ENCODE measurements at regions of chr1 and their contacts with region 1.

Region 1: DNA sequence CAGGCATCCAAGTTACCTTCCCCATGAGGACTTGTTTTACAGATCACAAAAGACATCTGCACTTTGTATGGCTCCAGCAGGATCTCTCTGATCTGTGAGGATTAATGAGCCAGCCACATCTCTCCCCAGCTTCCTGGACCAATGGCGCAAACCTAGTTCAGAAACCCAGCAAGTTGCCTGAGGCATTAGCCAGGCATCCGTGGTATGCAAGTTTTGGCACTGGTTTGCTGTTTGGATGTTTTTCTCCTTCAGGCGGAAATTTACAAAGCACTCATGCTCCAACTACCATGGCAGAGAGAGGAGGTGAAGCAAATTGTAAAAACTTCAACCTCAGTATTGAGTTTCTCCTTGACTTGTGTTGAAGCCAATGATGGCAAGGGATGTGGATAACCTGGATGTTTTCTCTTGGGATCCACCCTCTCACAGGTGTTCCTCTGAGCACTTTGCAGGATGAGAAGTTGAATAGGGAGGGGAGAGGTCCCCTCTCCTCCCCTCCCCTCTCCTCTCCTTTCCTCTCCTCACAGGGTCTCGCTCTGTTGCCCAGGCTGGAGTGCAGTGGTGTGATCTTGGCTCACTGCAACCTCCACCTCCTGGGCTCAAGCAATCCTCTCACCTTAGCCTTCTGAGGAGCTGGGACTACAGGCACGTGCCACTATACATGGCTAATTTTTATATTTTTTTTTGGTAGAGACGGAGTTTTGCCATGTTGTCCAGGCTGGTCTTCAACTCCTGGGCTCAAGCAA is 25.6 kb upstream of the ENO1 start:
- DNase-seq: no peak
- H3K4me3 Mint-ChIP-seq: no peak overlapping the region
- H3K27ac Mint-ChIP-seq: peak overlapping the region; percentile 80
- H3K4me1 Mint-ChIP-seq: peaks cover 51% of the 10 kb centered on the region
- H3K27me3 Mint-ChIP-seq: no peaks in the 10 kb centered on the region

Region 2: DNA sequence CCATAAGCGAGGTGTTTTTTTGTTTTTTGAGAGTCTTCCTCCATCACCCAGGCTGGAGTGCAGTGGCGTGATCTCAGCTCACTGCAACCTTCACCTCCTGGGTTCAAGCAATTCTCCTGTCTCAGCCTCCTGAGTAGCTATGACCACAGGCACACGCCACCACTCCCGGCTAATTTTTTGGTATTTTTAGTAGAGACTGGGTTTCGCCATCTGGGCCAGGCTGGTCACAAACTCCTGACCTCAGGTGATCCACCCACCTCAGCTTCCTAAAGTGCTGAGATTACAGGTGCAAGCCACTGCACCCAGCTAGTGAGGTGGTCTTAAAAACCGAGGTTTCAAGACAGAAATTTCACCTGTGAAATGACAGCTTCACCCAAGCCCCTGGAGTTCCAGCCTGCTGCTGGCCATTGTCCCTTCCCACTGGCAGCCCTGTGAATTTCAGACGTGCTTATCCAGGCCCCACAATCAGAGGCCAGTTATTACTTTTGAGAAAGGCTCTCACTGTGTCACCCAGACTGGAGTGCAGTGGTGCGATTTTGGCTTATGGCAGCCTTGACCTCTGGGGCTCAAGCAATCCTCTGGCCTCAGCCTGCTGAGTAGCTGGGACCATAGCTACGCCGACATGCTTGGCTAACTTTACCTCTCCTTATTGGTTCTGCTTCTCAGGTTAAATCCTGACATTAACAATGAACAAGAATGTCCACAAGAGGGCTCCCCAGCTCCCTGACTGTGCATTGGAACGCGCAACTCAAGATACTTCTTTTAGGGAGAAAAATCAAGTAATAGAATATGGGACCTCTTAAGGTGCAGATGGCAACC is 45.0 kb before region 1 on chr1:
- intact Hi-C with region 1: loop called (anchors 5 kb)
- DNase-seq: peak; percentile 40
- H3K4me3 Mint-ChIP-seq: peak overlapping the region; percentile 46
- H3K27ac Mint-ChIP-seq: peak overlapping the region; percentile 82
- H3K4me1 Mint-ChIP-seq: peaks cover 42% of the 10 kb centered on the region
- H3K27me3 Mint-ChIP-seq: no peaks in the 10 kb centered on the region

Region 3: DNA sequence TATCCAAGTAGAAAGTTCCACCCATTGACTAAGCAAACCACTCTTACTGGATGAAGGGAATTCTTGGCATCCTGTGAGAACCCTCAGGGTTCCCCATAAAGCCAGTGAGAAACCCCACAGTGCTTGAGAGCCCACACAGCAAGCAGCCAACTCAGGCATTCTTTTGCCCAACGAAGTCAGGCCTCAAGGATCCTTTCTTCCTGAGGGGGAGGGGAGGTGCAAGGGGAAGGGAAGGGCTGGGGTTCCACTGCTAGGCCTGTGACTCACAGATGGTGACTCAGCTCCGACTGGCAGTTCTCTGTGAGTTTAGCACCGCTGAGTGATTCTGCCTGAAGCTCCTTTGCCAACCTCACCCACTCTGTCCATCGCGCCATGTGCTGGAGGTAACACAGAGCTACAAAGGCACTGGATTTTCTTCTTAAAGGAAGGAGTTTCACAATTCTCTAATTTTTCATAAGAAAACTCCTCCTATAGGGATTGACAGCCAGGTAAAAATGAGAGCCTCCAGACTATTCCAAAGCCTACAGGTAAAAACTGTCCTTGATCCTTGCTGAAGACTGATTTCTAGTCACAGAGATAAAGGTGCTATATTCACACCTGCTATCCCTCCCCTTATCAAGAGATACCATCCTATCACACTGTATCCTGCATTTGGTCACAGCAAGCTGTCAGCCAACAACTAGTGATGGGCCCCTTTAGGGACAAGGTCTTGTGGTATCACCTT is 30.4 kb before region 1 on chr1:
- intact Hi-C with region 1: loop called (anchors 1 kb)
- DNase-seq: peak; percentile 64
- H3K4me3 Mint-ChIP-seq: peak overlapping the region; percentile 99
- H3K27ac Mint-ChIP-seq: peak overlapping the region; percentile 83
- H3K4me1 Mint-ChIP-seq: peaks cover 74% of the 10 kb centered on the region
- H3K27me3 Mint-ChIP-seq: peaks cover 2% of the 10 kb centered on the region

Region 4: DNA sequence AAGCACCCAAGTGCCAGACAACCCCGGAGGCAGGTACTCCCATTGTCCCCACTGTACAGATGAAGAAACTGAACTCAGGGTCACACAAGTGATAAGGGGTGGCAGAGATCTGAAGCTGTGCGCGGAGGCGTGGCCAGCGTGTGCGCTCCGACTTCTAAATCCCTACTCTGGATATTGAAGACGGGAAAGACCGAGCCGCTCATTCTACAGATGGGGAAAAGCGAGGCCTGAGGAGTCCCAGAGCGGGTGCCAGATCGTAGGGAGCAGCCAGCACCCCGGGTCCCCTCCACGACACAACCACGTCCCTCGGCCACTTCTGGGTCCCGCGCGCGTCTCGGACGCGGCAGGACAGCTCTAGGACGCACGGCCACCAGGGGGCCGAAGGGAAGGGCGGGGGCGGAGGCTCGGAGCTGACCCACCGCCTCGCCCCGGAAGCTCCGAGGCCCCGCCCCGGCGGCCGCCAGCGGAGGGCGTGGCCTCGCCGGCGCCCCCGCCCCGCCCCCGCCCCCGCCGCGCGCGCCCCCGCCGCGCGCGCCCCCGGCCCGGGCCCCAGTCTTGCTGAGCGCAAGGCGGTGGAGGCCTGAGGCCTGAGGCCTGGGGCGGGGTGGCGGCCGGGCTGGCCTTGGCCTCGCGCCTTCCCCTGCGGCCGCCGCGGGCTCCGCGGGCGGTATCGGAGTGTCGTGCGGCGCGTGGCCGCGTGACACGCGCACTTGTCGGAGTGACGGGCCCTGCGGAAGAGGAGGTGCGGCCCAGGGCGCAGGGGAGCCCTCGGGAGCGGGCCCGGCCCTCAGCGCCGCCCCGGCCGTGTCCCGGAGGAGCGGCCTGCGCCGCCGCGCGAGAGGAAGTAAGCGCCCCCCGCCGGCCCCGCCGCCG is 330.4 kb after region 1 on chr1 and contains the start of gene H6PD:
- intact Hi-C with region 1: loop called (anchors 5 kb)
- DNase-seq: peak; percentile 82
- H3K4me3 Mint-ChIP-seq: peak within 1 kb of the TSS; percentile 94
- H3K27ac Mint-ChIP-seq: peak within 1 kb of the TSS; percentile 98
- H3K4me1 Mint-ChIP-seq: peaks cover 36% of the 10 kb centered on the region
- H3K27me3 Mint-ChIP-seq: peaks cover 3% of the 10 kb centered on the region
- total RNA-seq, gene H6PD: 15.7 TPM in 2 replicates

Region 5: DNA sequence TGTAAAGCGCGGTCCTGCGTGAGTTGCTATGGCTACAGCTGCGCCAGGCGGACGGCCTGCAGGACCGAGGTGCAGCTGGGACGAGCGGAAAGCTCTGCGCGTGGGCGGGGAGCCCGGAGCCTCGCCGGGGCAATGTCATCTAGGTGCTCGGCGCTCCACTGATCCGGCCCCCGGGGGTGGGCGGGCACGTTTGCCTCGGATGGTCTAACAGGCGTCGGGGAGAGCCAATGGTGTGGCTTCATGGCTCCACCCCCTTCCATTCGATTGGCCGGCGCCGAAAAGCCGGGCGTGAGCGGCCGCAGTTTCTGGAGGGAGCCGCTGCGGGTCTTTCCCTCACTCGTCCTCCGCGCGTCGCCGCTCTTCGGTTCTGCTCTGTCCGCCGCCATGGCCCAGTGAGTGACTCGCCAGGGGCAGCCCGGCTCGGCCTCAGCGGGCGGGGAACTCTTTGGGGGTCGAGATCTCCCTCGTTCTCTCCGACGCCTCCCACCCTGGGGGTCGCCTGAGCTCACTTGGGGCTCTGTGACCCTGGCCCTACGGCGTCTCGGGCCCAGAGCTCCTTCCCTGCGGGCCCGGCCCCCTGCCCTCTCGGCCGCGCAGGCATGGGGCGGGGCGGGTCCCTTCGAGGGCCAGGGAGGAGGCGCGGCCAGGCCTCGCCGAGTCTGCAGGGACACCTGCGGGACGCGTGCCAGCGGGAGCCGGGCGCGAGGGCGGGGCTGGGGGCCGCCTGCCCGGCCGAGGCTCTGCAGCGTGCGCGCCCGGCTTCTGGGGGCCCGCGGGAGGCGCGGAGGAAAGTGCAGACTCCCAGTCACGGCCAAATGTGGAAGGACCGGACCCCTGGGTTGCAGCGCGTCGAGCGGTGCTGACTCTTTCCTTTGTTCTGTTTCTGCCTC is 1494.9 kb after region 1 on chr1 and contains the start of gene PGD:
- intact Hi-C with region 1: loop called (anchors 5 kb)
- DNase-seq: peak; percentile 98
- H3K4me3 Mint-ChIP-seq: peak within 1 kb of the TSS; percentile 92
- H3K27ac Mint-ChIP-seq: peak within 1 kb of the TSS; percentile 77
- H3K4me1 Mint-ChIP-seq: peaks cover 25% of the 10 kb centered on the region
- H3K27me3 Mint-ChIP-seq: no peaks in the 10 kb centered on the region
- total RNA-seq, gene PGD: 131 and 142 TPM in 2 replicates